PC-3 (cell line): ENCODE measurements at regions of chr12 and their contacts with region 1.

Region 1: DNA sequence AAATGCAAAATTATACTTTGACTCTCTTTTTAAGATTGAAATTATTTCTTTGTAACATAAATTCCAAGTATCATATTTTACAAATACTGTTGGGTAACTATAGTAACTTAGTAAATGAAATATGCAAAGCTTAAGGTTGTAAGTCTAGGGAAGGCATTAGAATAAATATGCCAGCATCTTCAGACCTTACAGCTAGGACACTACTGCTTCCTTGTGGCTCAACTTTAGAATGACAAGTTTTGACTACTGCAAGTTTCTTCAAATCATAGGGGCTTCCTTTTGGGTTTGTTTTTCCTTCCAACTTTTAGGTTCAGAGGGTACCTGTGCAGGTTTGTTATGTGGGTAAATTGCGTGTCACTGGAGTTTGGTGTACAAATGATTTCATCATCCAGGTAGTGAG is 17.7 kb upstream of the ANP32D start:
- DNase-seq: peak; percentile 58
- ATAC-seq: peak; percentile 49
- H3K4me3 ChIP-seq: no peak overlapping the region
- H3K27ac ChIP-seq: no peak overlapping the region
- H3K4me1 ChIP-seq: no peaks in the 10 kb centered on the region
- H3K27me3 ChIP-seq: peaks cover 39% of the 10 kb centered on the region
- CTCF ChIP-seq: peak; percentile 72

Region 2: GRCh38 chr12:48084066-48084465 is 370.6 kb before region 1 on chr12:
- CTCF ChIA-PET with region 1: no interaction called
- POLR2A ChIA-PET with region 1: no interaction called
- intact Hi-C with region 1: loop called (anchors 1 kb)
- DNase-seq: peak; percentile 25
- ATAC-seq: peak; percentile 27; the same call in 1 of the 2 replicates
- H3K4me3 ChIP-seq: no peak overlapping the region
- H3K27ac ChIP-seq: no peak overlapping the region
- H3K4me1 ChIP-seq: no peaks in the 10 kb centered on the region
- H3K27me3 ChIP-seq: no peaks in the 10 kb centered on the region
- CTCF ChIP-seq: peak; percentile 51

Region 3: GRCh38 chr12:48197971-48198671 is 256.5 kb before region 1 on chr12:
- CTCF ChIA-PET with region 1: no interaction called
- POLR2A ChIA-PET with region 1: no interaction called
- intact Hi-C with region 1: loop called (anchors 10 kb)
- DNase-seq: peak; percentile 77
- ATAC-seq: peak; percentile 82
- H3K4me3 ChIP-seq: peak overlapping the region; percentile 63
- H3K27ac ChIP-seq: peak overlapping the region; percentile 19
- H3K4me1 ChIP-seq: peaks cover 25% of the 10 kb centered on the region
- H3K27me3 ChIP-seq: peaks cover 10% of the 10 kb centered on the region
- CTCF ChIP-seq: no peak

Region 4: GRCh38 chr12:48247181-48247966 is 207.3 kb before region 1 on chr12:
- CTCF ChIA-PET with region 1: no interaction called
- POLR2A ChIA-PET with region 1: no interaction called
- intact Hi-C with region 1: loop called (anchors 1 kb)
- DNase-seq: no peak
- ATAC-seq: no peak
- H3K4me3 ChIP-seq: no peak overlapping the region
- H3K27ac ChIP-seq: no peak overlapping the region
- H3K4me1 ChIP-seq: no peaks in the 10 kb centered on the region
- H3K27me3 ChIP-seq: peaks cover 50% of the 10 kb centered on the region
- CTCF ChIP-seq: no peak

Region 5: GRCh38 chr12:48557919-48558318 is 103.3 kb after region 1 on chr12:
- CTCF ChIA-PET with region 1: no interaction called
- POLR2A ChIA-PET with region 1: no interaction called
- intact Hi-C with region 1: no loop called
- DNase-seq: no peak
- ATAC-seq: no peak
- H3K4me3 ChIP-seq: no peak overlapping the region
- H3K27ac ChIP-seq: no peak overlapping the region
- H3K4me1 ChIP-seq: no peaks in the 10 kb centered on the region
- H3K27me3 ChIP-seq: peaks cover 70% of the 10 kb centered on the region
- CTCF ChIP-seq: no peak